ENCODE measurements at regions of chr10 and their contacts with region 1.

Region 1: GRCh38 chr10:129971381-129972144 is 7.5 kb upstream of the EBF3 start:
- DNase-seq: peak; percentile 74 to 82
- ATAC-seq: peak; percentile 89 to 91 (median 90)
- H3K4me3 ChIP-seq: peak overlapping the region; percentile 68
- H3K27ac ChIP-seq: no peak overlapping the region
- H3K4me1 ChIP-seq: peaks cover 5% of the 10 kb centered on the region
- H3K27me3 ChIP-seq: peaks cover 0 to 74% (median 5%) of the 10 kb centered on the region in 3 donors
- CTCF ChIP-seq: peak; percentile 68

Region 2: DNA sequence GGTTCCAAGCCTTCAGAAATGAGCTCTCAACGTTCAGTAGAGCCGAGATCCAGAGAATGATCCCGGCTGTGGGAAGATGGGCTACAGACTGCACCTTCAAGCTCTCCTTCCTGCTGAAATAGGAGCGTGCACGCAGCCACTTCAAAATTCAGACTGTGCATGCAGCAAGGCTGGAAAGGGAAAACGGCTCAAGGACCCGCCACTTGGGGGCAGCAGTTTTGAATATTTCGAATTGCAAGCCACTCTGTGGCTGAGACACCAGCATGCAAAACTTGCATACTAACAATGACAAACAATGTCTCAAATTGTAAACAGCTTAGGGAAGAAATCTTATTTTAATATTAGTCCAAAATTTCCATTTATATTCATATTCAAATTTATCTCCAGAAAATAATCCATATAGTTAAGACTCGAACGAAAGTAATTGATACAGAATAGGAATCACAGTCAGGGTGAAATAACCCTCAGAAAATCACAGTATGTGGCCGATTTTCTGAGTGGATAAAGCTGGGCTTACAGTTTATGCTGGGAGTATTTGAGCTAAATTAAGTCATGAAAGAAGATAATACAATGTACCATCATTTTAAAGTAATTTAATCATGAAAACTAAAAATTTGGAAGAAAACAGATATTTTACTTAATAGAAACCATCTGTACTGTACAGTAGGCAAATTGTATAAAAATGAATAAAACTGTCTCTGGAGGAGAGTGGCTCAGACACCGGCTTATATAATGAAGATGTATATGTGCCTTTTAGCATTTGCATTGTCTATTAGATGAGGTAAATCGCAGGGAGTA is 1707.5 kb before region 1 on chr10:
- intact Hi-C with region 1: loop called in 1 of 2 experiments (anchors 5 kb)
- DNase-seq: peak; percentile 46 to 69
- ATAC-seq: peak in 1 of 4 donors; percentile 69
- H3K4me3 ChIP-seq: no peak overlapping the region
- H3K27ac ChIP-seq: no peak overlapping the region
- H3K4me1 ChIP-seq: no peaks in the 10 kb centered on the region
- H3K27me3 ChIP-seq: peaks cover 0 to 16% (median 2%) of the 10 kb centered on the region in 3 donors
- CTCF ChIP-seq: peak; percentile 61

Region 3: DNA sequence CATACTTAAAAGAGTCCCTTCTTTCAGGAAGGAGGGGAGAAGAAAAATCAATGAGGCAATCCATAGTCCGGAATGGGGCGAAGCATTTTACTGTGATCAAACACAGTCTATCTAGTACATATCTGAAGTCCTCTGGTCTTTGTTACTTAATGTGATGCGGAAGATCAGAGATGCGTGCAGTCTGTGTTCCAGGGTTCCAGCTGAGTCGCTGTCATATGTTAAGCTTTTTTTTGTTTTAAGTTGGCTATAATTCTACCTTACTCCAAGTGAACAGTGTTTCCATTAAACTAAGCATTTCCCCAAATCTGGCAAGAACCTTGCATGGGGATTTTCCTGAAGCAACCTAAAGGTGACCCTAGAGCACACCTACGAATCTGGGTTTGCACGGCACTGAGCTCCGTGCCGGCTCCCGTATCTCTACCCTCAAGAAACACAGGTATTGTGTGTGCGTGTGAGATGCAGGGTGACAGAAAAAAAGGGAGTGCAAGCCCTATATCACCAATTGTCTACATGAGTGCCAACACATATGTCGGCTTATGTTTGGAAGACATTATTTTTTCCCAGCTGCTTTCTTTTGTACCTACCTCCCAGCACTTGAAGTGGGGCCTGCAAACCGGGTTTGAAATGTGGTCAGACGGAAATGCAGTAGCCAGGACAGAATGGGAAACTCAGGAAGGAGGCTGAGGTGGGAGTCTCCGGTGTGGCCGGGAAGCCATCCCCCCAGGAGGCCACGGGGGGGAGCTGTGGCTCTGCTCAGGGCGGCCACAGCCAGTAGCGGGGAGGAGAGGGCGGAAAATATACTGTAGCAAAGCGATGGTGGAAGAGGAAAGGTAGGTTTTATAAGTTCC is 940.3 kb before region 1 on chr10:
- intact Hi-C with region 1: loop called (anchors 1 to 5 kb)
- DNase-seq: peak; percentile 60 to 74
- ATAC-seq: peak; percentile 85 to 89 (median 87)
- H3K4me3 ChIP-seq: no peak overlapping the region
- H3K27ac ChIP-seq: no peak overlapping the region
- H3K4me1 ChIP-seq: no peaks in the 10 kb centered on the region
- H3K27me3 ChIP-seq: peaks cover 0 to 79% (median 6%) of the 10 kb centered on the region in 3 donors
- CTCF ChIP-seq: peak; percentile 95

Region 4: GRCh38 chr10:129704786-129705525 is 266.6 kb before region 1 on chr10:
- intact Hi-C with region 1: no loop called
- DNase-seq: no peak
- ATAC-seq: no peak
- H3K4me3 ChIP-seq: no peak overlapping the region
- H3K27ac ChIP-seq: no peak overlapping the region
- H3K4me1 ChIP-seq: peaks cover 7% of the 10 kb centered on the region
- H3K27me3 ChIP-seq: no peaks in the 10 kb centered on the region
- CTCF ChIP-seq: no peak

Region 5: DNA sequence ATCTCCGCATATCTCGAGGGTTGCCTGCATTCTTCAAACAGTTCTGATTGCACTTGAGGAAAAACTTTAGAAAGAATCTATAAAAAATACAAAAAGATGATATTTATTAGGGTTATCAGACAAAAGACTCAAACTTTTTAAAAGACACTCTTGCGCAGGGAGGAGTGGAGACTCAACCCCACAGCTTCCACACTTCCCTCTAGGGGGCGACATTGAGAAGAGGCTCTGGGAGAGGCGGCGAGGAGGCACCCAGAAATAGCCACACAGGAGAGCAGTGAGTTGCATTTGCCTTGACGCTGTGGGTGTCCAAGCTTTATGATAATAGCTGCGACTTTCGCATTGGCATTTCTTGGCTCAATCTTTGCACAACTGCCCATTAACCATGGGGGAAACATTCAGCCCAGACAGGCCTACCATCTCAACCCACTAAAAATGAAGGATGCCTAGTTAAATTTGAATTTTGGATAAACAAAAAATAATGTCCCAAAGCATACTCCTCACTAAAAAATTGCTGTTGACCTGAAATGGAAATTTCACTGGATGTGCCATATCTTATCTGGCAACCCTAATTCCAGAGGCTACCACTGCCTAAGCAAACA is 93.7 kb before region 1 on chr10:
- intact Hi-C with region 1: loop called in 1 of 2 experiments (anchors 5 kb)
- DNase-seq: peak in 1 of 2 donors; percentile 62
- ATAC-seq: peak in 3 of 4 donors; percentile 67 to 85 (median 83)
- H3K4me3 ChIP-seq: no peak overlapping the region
- H3K27ac ChIP-seq: no peak overlapping the region
- H3K4me1 ChIP-seq: peaks cover 13% of the 10 kb centered on the region
- H3K27me3 ChIP-seq: no peaks in the 10 kb centered on the region
- CTCF ChIP-seq: peak; percentile 55

Region 6: GRCh38 chr10:130110246-130111112 is 138.9 kb after region 1 on chr10 and contains the start of gene C10orf143:
- intact Hi-C with region 1: loop called in 1 of 2 experiments (anchors 5 kb)
- DNase-seq: peak; percentile 98 to 99
- ATAC-seq: peak; percentile 94 to 96 (median 96)
- H3K4me3 ChIP-seq: peak within 1 kb of the TSS; percentile 74
- H3K27ac ChIP-seq: peak within 1 kb of the TSS; percentile 91
- H3K4me1 ChIP-seq: peaks cover 24% of the 10 kb centered on the region
- H3K27me3 ChIP-seq: no peaks in the 10 kb centered on the region
- CTCF ChIP-seq: no peak
- total RNA-seq, gene C10orf143: 4.1 to 5.1 (median 4.9) TPM

Measured in psoas muscle (tissue), 8 donors.